H1 (cell line): ENCODE measurements at regions of chr12 and their contacts with region 1.

Region 1: GRCh38 chr12:12837025-12837872 is 24.1 kb downstream of the DDX47 start:
- DNase-seq: peak in 1 of 2 experiments; percentile 51
- H3K4me3 ChIP-seq: no peak overlapping the region
- H3K27ac ChIP-seq: no peak overlapping the region
- H3K4me1 ChIP-seq: peaks cover 0 to 2% (median 0%) of the 10 kb centered on the region in 4 experiments; a peak in 2 of 7 replicates
- H3K27me3 ChIP-seq: no peaks in the 10 kb centered on the region
- CTCF ChIP-seq: peak in 2 of 3 experiments; percentile 45 to 65; a peak in 2 of 4 replicates
- EP300 ChIP-seq: no peak
- POLR2A ChIP-seq: no peak
- RAD21 ChIP-seq: peak; percentile 59 to 60

Region 2: GRCh38 chr12:12663644-12664294 is 173.5 kb before region 1 on chr12:
- CTCF ChIA-PET with region 1: no interaction called
- POLR2A ChIA-PET with region 1: no interaction called
- DNase-seq: no peak
- H3K4me3 ChIP-seq: no peak overlapping the region
- H3K27ac ChIP-seq: no peak overlapping the region
- H3K4me1 ChIP-seq: peaks cover 4 to 18% (median 14%) of the 10 kb centered on the region in 4 experiments; a peak in 6 of 7 replicates
- H3K27me3 ChIP-seq: no peaks in the 10 kb centered on the region
- CTCF ChIP-seq: no peak
- EP300 ChIP-seq: no peak
- POLR2A ChIP-seq: no peak
- RAD21 ChIP-seq: no peak

Region 3: GRCh38 chr12:12813120-12814101 is 23.8 kb before region 1 on chr12 and contains the start of gene DDX47:
- CTCF ChIA-PET with region 1: interaction called, 19 read pairs
- POLR2A ChIA-PET with region 1: interaction called, 8 read pairs
- DNase-seq: peak; percentile 76 to 100
- H3K4me3 ChIP-seq: peak within 1 kb of the TSS; percentile 78 to 99 (median 93)
- H3K27ac ChIP-seq: peak within 1 kb of the TSS; percentile 81
- H3K4me1 ChIP-seq: no peaks in the 10 kb centered on the region; a peak in 1 of 7 replicates
- H3K27me3 ChIP-seq: no peaks in the 10 kb centered on the region
- CTCF ChIP-seq: peak; percentile 86 to 96 (median 91)
- EP300 ChIP-seq: no peak
- POLR2A ChIP-seq: peak; percentile 65 to 85
- RAD21 ChIP-seq: peak; percentile 15 to 32; a peak in 1 of 4 replicates
- total RNA-seq, gene DDX47: 74.2 and 84.4 TPM in 2 replicates

Region 4: DNA sequence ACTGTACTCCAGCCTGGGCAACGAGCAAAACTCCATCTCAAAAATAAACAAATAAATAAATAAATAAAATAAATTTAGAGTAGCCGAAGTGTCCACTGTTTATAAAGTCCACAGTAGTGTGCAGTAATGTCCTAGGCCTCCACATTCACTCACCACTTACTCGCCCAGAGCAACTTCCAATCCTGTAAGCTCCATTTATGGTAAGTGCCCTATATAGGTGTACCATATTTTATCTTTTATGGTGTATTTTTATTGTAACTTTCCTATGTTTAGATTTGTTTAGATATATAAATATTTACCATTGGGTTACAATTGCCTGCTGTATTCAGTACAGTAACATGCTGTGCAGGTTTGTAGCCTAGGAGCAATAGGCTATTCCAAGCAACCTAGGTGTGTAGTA is 16.2 kb after region 1 on chr12:
- CTCF ChIA-PET with region 1: interaction called, 30 read pairs
- POLR2A ChIA-PET with region 1: interaction called, 4 read pairs
- DNase-seq: no peak
- H3K4me3 ChIP-seq: no peak overlapping the region
- H3K27ac ChIP-seq: no peak overlapping the region
- H3K4me1 ChIP-seq: no peaks in the 10 kb centered on the region
- H3K27me3 ChIP-seq: no peaks in the 10 kb centered on the region
- CTCF ChIP-seq: no peak
- EP300 ChIP-seq: no peak
- POLR2A ChIP-seq: no peak
- RAD21 ChIP-seq: no peak

Region 5: DNA sequence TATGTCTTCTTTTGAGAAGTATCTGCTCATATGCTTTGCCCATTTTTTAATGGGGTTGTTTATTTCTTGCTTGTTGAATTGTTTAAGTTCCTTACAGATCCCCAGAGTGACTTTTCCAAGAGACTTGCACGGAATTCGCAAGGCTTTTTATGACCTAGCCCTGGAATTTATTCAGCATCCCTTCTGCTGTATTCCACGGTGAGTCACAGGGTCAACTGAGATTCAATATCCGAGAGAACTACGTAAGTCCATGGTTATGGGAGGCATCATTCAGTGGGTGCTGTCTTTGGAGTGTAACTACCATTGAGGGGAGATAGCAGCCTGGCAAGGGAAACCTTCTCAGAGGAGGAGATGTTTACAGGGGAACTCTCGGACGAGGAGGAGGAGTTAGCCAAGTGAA is 33.2 kb after region 1 on chr12:
- CTCF ChIA-PET with region 1: interaction called, 11 read pairs
- POLR2A ChIA-PET with region 1: interaction called, 3 read pairs
- DNase-seq: no peak
- H3K4me3 ChIP-seq: no peak overlapping the region
- H3K27ac ChIP-seq: no peak overlapping the region
- H3K4me1 ChIP-seq: peaks cover 5 to 10% (median 10%) of the 10 kb centered on the region in 4 experiments; a peak in 6 of 7 replicates
- H3K27me3 ChIP-seq: no peaks in the 10 kb centered on the region
- CTCF ChIP-seq: no peak
- EP300 ChIP-seq: no peak
- POLR2A ChIP-seq: no peak
- RAD21 ChIP-seq: no peak

Region 6: DNA sequence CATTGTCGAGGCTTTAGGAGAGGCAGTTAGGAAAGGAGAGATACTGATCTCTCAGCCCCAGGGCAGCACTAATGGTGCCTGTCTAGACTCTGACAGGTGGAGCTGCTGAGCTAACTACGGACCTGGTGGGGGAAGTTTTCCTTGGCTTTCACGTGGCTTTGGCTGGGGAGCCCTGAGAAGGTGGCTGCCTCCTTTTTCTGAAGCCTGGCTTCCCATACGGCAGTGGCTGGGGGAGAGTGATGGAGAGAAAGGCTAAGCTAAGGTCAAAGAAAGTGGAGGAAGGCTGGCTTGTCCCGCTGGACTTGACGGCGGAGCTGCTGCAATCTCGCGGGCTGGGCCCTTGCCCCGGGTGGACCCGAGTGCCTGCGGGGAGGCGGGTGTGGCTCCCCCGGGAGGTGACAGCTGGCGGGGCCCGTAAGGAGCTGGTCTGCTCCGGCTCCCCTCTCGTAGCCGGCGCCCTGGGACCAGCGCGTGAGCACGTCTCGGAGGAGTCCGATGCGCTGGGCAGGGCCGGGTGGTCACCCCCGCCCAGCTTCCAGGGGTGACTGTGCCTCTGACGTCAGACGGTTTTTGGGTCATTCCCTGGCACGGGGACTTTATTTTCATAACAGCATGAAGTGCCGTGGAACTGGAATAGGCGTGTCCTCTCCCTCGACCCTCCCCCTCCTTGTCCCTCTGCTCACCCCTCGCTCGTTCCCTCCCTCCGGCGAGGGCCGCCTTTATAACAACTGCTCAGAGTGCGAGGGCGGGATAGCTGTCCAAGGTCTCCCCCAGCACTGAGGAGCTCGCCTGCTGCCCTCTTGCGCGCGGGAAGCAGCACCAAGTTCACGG is 53.8 kb after region 1 on chr12 and contains the start of gene GPRC5A:
- CTCF ChIA-PET with region 1: interaction called, 16 read pairs
- POLR2A ChIA-PET with region 1: no interaction called
- DNase-seq: peak in 1 of 2 experiments; percentile 75
- H3K4me3 ChIP-seq: peak within 1 kb of the TSS; percentile 59 to 72 (median 66)
- H3K27ac ChIP-seq: no peak within 1 kb of the TSS
- H3K4me1 ChIP-seq: peaks cover 6 to 13% (median 9%) of the 10 kb centered on the region in 4 experiments; a peak in 5 of 7 replicates
- H3K27me3 ChIP-seq: peaks cover 0 to 36% (median 23%) of the 10 kb centered on the region in 4 experiments; a peak in 6 of 7 replicates
- CTCF ChIP-seq: peak; percentile 1 to 15 (median 11); a peak in 2 of 4 replicates
- EP300 ChIP-seq: no peak
- POLR2A ChIP-seq: no peak
- RAD21 ChIP-seq: peak; percentile 6 to 38; a peak in 3 of 4 replicates
- total RNA-seq, gene GPRC5A: 1.0 and 1.5 TPM in 2 replicates

Region 7: GRCh38 chr12:12916135-12916944 is 79.1 kb after region 1 on chr12:
- CTCF ChIA-PET with region 1: interaction called, 21 read pairs
- POLR2A ChIA-PET with region 1: no interaction called
- DNase-seq: peak; percentile 57 to 94
- H3K4me3 ChIP-seq: no peak overlapping the region
- H3K27ac ChIP-seq: no peak overlapping the region
- H3K4me1 ChIP-seq: peaks cover 0 to 6% (median 1%) of the 10 kb centered on the region in 4 experiments; a peak in 4 of 7 replicates
- H3K27me3 ChIP-seq: no peaks in the 10 kb centered on the region; a peak in 1 of 7 replicates
- CTCF ChIP-seq: peak; percentile 93 to 99 (median 94)
- EP300 ChIP-seq: no peak
- POLR2A ChIP-seq: no peak
- RAD21 ChIP-seq: peak; percentile 99

Region 8: DNA sequence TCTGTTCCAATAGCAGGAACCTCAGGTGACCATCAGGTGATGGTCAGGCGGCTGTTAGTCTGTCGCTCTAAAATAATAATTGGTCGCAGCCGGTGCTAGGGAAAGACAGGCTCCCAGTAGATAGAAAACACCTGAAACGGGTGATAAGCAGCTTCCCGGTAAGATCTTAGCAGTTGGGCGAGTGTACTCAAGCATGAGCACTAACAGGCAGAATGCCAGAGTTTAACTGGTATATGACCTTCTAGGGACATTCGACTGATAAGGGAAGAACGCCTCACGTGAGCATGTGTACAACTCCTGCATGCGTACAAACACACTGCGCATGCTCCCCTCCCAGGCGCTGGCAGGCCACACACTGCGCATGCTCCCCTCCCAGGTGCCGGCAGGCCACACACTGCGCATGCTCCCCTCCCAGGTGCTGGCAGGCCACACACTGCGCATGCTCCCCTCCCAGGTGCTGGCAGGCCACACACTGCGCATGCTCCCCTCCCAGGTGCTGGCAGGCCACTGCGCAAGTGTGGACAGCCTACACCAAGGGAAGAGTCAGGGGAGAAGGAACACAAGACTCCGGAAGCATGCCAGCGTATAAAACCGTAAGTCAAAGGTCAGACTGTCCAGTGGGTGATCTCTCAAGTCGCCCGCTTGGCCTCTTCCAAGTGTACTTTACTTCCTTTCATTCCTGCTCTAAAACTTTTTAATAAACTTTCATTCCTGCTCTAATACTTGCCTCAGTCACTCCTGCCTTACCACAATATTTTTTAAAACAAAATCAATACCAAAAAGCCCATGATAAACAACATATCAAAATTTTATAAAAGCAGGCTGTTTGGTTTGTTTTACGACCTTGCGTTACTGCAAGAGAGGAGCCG is 90.2 kb after region 1 on chr12:
- CTCF ChIA-PET with region 1: no interaction called
- POLR2A ChIA-PET with region 1: no interaction called
- DNase-seq: peak in 1 of 2 experiments; percentile 68
- H3K4me3 ChIP-seq: peak overlapping the region in 1 of 4 experiments; percentile 51; a peak in 1 of 8 replicates
- H3K27ac ChIP-seq: no peak overlapping the region
- H3K4me1 ChIP-seq: peaks cover 0 to 4% (median 0%) of the 10 kb centered on the region in 4 experiments; a peak in 2 of 7 replicates
- H3K27me3 ChIP-seq: no peaks in the 10 kb centered on the region
- CTCF ChIP-seq: no peak
- EP300 ChIP-seq: no peak
- POLR2A ChIP-seq: no peak
- RAD21 ChIP-seq: no peak

Region 9: DNA sequence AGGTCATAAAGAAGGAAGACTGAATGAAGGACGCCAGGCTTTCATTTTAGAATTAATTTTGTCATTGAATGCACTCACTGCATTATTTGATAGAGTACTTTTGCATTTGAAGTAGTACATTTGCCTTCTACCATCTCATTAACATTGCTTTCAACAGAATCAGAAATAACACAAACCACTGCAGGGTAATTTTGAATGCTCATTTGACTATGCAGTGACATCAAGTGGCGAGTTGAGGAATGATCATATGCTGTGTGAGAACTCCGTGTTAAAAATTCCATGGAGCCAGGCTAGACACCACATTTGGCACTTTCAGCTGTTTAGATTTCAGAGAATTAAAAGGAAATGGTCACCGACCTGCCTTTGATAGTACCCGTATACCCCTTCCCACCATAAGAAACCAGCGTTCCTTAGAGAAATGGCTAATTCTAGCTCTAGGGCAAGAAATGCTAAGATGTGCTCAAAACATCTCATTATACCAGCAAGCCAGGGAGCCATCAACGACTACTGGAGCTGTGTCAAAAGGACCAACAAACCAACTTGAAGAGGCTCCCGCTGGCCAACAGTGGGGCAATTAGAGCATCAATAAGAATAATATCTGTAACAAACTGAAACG is 146.3 kb after region 1 on chr12:
- CTCF ChIA-PET with region 1: interaction called, 16 read pairs
- POLR2A ChIA-PET with region 1: no interaction called
- DNase-seq: no peak
- H3K4me3 ChIP-seq: no peak overlapping the region
- H3K27ac ChIP-seq: no peak overlapping the region
- H3K4me1 ChIP-seq: peaks cover 0 to 7% (median 2%) of the 10 kb centered on the region in 4 experiments; a peak in 3 of 7 replicates
- H3K27me3 ChIP-seq: no peaks in the 10 kb centered on the region
- CTCF ChIP-seq: peak in 2 of 3 experiments; percentile 52 to 60; a peak in 3 of 4 replicates
- EP300 ChIP-seq: no peak
- POLR2A ChIP-seq: no peak
- RAD21 ChIP-seq: peak; percentile 57 to 65